ENCODE measurements at regions of chr10 and their contacts with region 1.

Region 1: DNA sequence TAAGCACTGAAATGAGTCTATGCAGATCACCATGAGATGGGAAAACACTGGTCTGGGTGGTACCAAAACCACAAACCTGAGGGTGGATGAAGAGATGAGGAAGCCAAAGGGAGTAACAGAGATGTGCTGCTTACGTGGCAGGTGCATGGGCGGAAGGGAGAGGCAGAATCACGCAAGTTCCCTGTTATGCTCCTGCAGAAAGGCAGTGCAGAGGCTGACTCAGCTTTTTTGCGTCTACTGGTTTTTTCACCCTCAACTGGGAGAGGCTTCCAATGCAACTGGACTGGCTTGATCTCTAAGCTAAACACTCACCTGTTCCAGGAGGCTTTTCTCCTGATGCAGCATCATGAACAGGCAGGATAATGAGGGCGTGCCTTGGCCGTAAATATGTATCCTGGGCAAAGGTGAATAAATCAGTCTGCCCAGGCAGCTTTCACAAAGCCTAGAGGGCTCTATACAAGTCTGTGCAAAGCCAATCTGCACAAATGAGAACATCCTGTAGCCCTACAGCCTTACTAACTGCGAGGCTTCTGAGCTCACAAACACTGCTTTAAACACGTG is 95.4 kb upstream of the AFAP1L2 start:
- DNase-seq: no peak
- ATAC-seq: no peak

Region 2: GRCh38 chr10:113011592-113012374 is 1487.9 kb before region 1 on chr10:
- intact Hi-C with region 1: loop called (anchors 5 kb)
- DNase-seq: no peak
- ATAC-seq: no peak